ENCODE measurements at regions of chr12 and their contacts with region 1.

Region 1: GRCh38 chr12:117119592-117120198 is 20.5 kb upstream of the TESC start:
- DNase-seq: peak in 4 of 5 donors; percentile 24 to 46 (median 29)
- H3K4me3 ChIP-seq: no peak overlapping the region
- H3K4me3 Mint-ChIP-seq: no peak overlapping the region
- H3K27ac ChIP-seq: no peak overlapping the region
- H3K27ac Mint-ChIP-seq: peak overlapping the region in 1 of 7 donors; percentile 17
- H3K4me1 ChIP-seq: no peaks in the 10 kb centered on the region
- H3K4me1 Mint-ChIP-seq: no peaks in the 10 kb centered on the region
- H3K27me3 ChIP-seq: no peaks in the 10 kb centered on the region
- H3K27me3 Mint-ChIP-seq: no peaks in the 10 kb centered on the region

Region 2: GRCh38 chr12:116838365-116838764 is 281.3 kb before region 1 on chr12:
- CTCF ChIA-PET with region 1: no interaction called
- POLR2A ChIA-PET with region 1: no interaction called
- intact Hi-C with region 1: no loop called
- DNase-seq: no peak
- H3K4me3 ChIP-seq: no peak overlapping the region
- H3K4me3 Mint-ChIP-seq: no peak overlapping the region
- H3K27ac ChIP-seq: no peak overlapping the region
- H3K27ac Mint-ChIP-seq: no peak overlapping the region
- H3K4me1 ChIP-seq: no peaks in the 10 kb centered on the region
- H3K4me1 Mint-ChIP-seq: no peaks in the 10 kb centered on the region
- H3K27me3 ChIP-seq: no peaks in the 10 kb centered on the region
- H3K27me3 Mint-ChIP-seq: no peaks in the 10 kb centered on the region

Region 3: GRCh38 chr12:117025481-117026151 is 94.1 kb before region 1 on chr12:
- CTCF ChIA-PET with region 1: interaction called, 187 read pairs
- POLR2A ChIA-PET with region 1: no interaction called
- intact Hi-C with region 1: loop called (anchors 1 kb)
- DNase-seq: peak; percentile 39 to 52 (median 40)
- H3K4me3 ChIP-seq: no peak overlapping the region
- H3K4me3 Mint-ChIP-seq: peak overlapping the region in 1 of 8 donors; percentile 23
- H3K27ac ChIP-seq: no peak overlapping the region
- H3K27ac Mint-ChIP-seq: peak overlapping the region in 5 of 7 donors; percentile 25 to 82 (median 59)
- H3K4me1 ChIP-seq: peaks cover 6% of the 10 kb centered on the region
- H3K4me1 Mint-ChIP-seq: peaks cover 0 to 10% (median 5%) of the 10 kb centered on the region in 4 donors
- H3K27me3 ChIP-seq: no peaks in the 10 kb centered on the region
- H3K27me3 Mint-ChIP-seq: no peaks in the 10 kb centered on the region

Region 4: DNA sequence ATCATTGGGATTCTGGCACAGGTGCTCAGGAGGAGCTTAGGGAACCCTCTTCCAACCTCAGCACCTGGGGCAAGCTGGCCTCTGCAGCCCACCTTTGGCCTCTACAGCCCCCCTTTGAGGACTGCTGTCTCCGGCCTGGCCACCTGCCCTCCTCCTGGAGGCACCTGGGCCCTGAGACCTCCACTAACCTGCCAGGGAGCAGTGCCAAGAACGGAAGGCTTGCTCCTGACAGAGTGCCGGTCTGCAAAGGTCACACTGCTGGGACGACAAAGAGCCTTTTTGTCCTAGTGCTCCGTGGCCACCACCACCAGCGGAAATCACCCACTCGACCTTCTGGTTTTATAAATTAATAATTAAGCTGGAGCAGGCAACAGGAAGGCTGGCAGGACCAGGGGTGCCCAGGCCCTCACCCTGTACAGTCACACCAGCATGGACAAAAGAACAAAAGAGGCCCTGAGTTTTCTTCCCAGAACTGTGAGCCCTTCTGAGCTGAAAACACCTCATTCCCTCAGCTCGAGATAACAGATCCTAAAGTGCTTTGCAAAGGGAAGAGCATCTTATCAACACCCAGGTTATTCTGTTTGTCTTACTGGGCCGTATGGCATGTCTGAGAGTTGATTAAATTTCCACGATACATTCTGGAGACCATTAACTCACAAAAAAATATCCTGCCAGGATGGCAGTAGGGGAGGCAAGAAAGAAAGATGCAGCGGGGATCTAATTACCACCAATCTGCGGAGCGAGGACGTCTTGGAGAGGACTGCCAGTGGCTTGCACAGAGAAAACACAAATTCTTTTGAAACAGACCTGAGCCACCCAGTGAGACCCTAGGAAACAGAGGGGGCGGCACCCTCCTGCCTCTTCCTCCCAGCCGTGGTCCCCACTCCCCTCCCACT is 28.6 kb before region 1 on chr12:
- CTCF ChIA-PET with region 1: no interaction called
- POLR2A ChIA-PET with region 1: no interaction called
- intact Hi-C with region 1: no loop called
- DNase-seq: no peak
- H3K4me3 ChIP-seq: no peak overlapping the region
- H3K4me3 Mint-ChIP-seq: no peak overlapping the region
- H3K27ac ChIP-seq: no peak overlapping the region
- H3K27ac Mint-ChIP-seq: no peak overlapping the region
- H3K4me1 ChIP-seq: no peaks in the 10 kb centered on the region
- H3K4me1 Mint-ChIP-seq: peaks cover 0 to 5% (median 0%) of the 10 kb centered on the region in 4 donors
- H3K27me3 ChIP-seq: no peaks in the 10 kb centered on the region
- H3K27me3 Mint-ChIP-seq: no peaks in the 10 kb centered on the region

Region 5: GRCh38 chr12:117134059-117134458 is 14.4 kb after region 1 on chr12:
- CTCF ChIA-PET with region 1: interaction called, 28 read pairs
- POLR2A ChIA-PET with region 1: no interaction called
- intact Hi-C with region 1: no loop called
- DNase-seq: peak; percentile 63 to 80 (median 65)
- H3K4me3 ChIP-seq: peak overlapping the region in 1 of 2 donors; percentile 18
- H3K4me3 Mint-ChIP-seq: peak overlapping the region; percentile 17 to 74 (median 49)
- H3K27ac ChIP-seq: no peak overlapping the region
- H3K27ac Mint-ChIP-seq: peak overlapping the region; percentile 51 to 93 (median 86)
- H3K4me1 ChIP-seq: peaks cover 17% of the 10 kb centered on the region
- H3K4me1 Mint-ChIP-seq: peaks cover 9 to 20% (median 13%) of the 10 kb centered on the region in 4 donors
- H3K27me3 ChIP-seq: no peaks in the 10 kb centered on the region
- H3K27me3 Mint-ChIP-seq: no peaks in the 10 kb centered on the region

Measured in CD4-positive, alpha-beta memory T cell (primary cell).